Panc1 (cell line): ENCODE measurements at regions of chr6 and their contacts with region 1.

Region 1: DNA sequence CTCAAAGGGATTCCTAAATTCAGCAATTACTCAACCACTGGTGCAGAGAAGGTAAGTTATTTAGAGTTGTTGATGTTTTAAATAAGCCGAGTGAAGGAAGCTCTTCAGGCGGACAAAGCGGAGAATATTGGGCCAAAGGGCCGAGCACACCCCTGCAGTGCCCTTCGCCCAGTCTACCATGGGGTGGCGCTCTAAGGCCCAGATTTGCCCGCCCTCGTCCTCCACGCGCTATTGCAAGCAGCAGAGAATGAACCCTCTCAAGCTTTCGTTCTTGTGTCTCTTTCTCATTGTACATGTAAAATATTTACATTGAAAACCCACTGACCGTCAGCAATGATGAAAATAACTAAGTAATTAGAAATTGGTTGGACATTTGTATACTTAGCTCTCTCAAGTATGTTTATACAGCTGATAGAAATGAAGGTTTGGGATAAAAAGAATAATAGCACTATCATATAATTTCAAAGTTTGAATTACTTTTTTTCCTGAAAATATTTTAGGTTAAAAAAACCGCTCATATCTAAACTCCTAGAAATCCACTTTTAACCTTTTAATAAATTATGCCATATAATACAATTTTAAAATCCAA is 195.0 kb upstream of the CEP162 start:
- DNase-seq: peak; percentile 17
- ATAC-seq: peak; percentile 94
- H3K4me3 ChIP-seq: no peak overlapping the region
- H3K27ac ChIP-seq: no peak overlapping the region
- H3K4me1 ChIP-seq: no peaks in the 10 kb centered on the region; the same call in 1 of the 2 replicates
- H3K27me3 ChIP-seq: no peaks in the 10 kb centered on the region
- CTCF ChIP-seq: peak; percentile 87

Region 2: GRCh38 chr6:84774157-84774984 is 351.9 kb after region 1 on chr6:
- CTCF ChIA-PET with region 1: no interaction called
- POLR2A ChIA-PET with region 1: no interaction called
- in situ Hi-C with region 1: no loop called
- intact Hi-C with region 1: loop called (anchors 5 kb)
- DNase-seq: no peak
- ATAC-seq: peak; percentile 94
- H3K4me3 ChIP-seq: peak overlapping the region; percentile 41 to 60
- H3K27ac ChIP-seq: no peak overlapping the region
- H3K4me1 ChIP-seq: no peaks in the 10 kb centered on the region; the same call in 1 of the 2 replicates
- H3K27me3 ChIP-seq: peaks cover 41% of the 10 kb centered on the region
- CTCF ChIP-seq: peak; percentile 91